ENCODE measurements at regions of chr10 and their contacts with region 1.

Region 1: DNA sequence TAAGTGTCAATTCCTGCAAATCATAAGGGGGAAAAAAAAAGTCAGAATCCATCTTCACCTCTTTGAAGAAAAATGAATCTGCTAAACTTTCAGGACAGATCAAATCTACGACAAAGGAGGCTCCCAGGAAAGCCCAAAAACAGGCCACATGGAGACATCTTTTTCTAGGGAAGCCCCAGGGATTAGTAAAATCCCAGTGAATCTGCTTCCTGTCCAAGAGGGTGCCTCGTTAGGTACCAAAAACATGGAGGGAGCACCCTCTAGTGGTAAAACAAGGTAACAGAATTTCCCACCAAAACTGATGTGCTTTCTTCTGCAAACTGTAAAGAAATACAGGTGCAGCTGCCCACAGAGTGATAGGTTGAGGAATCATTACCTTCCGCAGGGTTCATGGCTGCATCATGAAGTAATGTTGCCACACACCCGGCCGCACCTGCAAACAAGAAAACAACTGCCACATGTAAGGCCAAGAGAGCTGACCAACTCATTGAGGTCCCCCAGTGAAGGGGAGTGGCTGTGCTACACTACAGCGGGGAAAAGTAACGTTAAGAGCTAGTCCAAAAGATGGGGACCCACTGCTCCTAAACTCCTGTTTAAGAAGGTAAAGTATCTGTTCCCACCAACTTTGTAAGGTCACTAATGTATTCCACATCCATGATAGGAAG is 7.9 kb downstream of the SLC25A28 start:
- DNase-seq: no peak
- H3K4me3 ChIP-seq: no peak overlapping the region
- CTCF ChIP-seq: peak; percentile 76

Region 2: DNA sequence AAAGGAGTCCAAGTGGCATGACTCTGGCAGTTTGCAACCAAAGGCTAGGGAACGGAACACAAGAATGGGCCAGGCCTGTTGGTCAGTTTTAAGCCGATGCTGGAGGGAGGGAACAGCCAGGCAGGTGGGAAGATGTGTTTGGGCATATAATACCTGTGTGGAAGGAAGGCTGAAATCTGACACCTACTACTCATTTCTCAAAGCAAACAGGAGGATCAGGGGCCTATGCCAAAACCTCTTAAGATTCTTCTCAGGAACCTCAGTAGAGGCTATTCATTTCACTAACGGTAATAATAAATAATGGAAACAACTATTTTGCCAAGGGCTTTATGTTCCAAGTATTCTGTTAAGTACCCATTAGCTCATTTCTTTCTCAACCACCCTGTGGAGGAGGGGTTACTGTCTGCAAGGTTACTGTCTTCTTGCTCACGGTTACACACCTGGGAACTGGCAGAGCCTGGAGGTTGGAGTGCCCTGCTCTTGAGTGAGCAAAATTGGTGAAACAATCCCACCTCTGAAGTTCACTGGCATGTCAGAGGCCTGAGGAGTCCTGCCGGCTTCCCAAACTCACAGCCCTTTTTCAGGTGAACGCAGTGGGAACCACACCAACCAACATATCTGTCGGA is 217.4 kb before region 1 on chr10:
- CTCF ChIA-PET with region 1: interaction called, 63 read pairs
- POLR2A ChIA-PET with region 1: no interaction called
- DNase-seq: no peak
- H3K4me3 ChIP-seq: no peak overlapping the region
- CTCF ChIP-seq: no peak

Region 3: GRCh38 chr10:99430451-99431189 is 181.7 kb before region 1 on chr10 and contains the start of gene GOT1:
- CTCF ChIA-PET with region 1: interaction called, 245 read pairs
- POLR2A ChIA-PET with region 1: interaction called, 3 read pairs
- DNase-seq: peak; percentile 93
- H3K4me3 ChIP-seq: peak within 1 kb of the TSS; percentile 100
- CTCF ChIP-seq: no peak

Region 4: DNA sequence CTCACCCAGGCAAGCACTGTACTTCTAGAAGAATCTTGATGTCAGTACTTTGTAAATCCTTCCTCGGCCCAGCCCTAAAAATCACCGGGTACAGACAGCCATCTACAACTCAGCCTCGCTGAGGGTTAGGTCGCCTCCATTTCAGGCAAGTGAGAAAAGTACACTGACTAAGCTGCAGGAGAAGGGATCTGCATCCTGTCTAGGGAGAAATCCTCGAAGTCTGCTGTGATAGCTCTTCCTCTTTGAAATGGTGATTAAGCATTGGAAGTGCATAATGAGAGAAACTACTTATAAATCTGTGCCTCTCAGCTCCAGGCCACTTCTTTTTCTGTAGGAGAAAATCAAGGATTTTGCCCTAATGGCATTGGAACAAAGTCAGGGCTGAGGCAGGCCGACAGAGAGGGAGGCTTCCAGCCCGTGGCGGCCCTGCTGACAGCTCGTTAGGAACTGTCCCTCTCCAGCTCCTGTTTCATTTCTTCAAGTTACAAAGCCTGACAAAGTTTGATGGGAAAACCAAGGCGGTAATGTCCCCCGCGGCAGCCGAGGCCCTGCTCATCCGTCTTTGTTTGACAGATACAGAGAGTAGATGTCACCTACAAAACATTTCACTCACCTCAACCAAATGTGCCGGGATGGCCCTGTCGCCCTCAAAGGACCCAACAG is 167.8 kb before region 1 on chr10:
- CTCF ChIA-PET with region 1: interaction called, 245 read pairs
- POLR2A ChIA-PET with region 1: no interaction called
- DNase-seq: no peak
- H3K4me3 ChIP-seq: no peak overlapping the region
- CTCF ChIP-seq: no peak

Region 5: GRCh38 chr10:99560277-99561126 is 51.8 kb before region 1 on chr10:
- CTCF ChIA-PET with region 1: interaction called, 57 read pairs
- POLR2A ChIA-PET with region 1: no interaction called
- DNase-seq: no peak
- H3K4me3 ChIP-seq: no peak overlapping the region
- CTCF ChIP-seq: peak; percentile 56

Region 6: GRCh38 chr10:99595770-99596465 is 16.4 kb before region 1 on chr10:
- CTCF ChIA-PET with region 1: interaction called, 14 read pairs
- POLR2A ChIA-PET with region 1: no interaction called
- DNase-seq: no peak
- H3K4me3 ChIP-seq: no peak overlapping the region
- CTCF ChIP-seq: no peak